ENCODE measurements at regions of chr19 and their contacts with region 1.

Region 1: DNA sequence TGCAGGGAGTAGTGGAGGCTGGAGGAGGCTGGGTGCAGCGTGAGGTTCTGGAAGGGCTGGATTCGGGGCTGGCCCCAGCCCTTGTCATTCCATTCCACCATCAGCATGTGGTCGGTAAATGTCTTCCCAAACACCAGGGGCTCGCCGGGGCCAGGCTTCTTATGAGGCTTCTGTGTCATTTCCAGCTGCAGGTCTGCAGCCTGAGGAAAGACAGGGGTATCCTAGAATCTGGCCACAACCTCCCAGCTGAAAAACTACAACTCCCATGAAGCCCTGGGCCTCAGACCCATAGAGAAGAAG is 4.4 kb downstream of the BCAT2 start:
- DNase-seq: no peak
- H3K4me3 ChIP-seq: no peak overlapping the region
- H3K27ac ChIP-seq: no peak overlapping the region
- H3K4me1 ChIP-seq: no peaks in the 10 kb centered on the region
- H3K27me3 ChIP-seq: no peaks in the 10 kb centered on the region
- CTCF ChIP-seq: no peak

Region 2: DNA sequence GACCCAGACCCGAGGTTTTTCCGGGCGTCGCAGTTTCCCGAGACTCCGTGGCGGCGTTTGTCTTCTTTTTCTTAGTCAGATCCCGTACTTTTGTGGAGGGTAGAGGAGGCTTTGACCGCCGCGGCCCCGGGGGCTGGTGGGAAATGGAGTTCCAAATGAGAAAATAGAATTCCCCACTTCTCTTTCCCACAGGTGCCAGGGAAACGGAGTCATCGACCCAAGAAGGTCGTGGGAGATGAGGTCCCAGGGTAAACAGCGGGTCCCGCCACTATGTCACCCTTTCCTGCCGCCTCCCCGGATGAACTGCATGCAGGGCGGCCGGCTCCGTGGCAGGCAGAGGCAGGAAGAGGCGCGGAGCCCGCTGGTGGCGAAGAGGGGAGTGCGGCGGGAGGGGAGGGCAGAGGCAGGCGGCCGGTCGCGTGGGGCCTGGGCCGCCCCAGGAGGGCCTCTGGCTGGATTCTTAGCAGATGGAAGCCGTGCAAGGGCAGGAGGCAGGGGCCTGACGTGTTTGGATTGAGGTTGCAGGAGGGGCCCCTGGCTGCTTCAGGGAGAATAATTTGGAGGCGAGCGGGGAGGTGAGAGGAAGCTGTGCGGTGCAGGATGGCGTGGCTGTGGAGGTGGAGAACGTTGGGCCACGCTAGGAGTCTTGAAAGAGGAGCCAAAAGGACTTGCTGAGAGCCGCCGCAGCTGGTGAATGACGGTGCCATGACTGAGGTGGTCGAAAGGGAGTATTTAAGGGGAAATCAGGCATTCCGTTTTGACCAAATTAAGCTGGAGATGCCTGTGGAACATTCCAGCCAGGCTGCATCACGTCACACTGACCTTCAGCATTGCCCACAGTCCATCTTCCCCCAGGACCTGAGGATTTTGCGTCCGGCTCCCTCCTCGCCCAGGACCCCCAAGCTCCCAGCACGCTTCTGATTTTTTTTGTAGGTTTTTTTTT is 325.6 kb before region 1 on chr19:
- CTCF ChIA-PET with region 1: no interaction called
- dilution Hi-C with region 1: no loop called
- in situ Hi-C with region 1: no loop called
- intact Hi-C with region 1: no loop called
- DNase-seq: no peak
- H3K4me3 ChIP-seq: no peak overlapping the region
- H3K27ac ChIP-seq: no peak overlapping the region
- H3K4me1 ChIP-seq: no peaks in the 10 kb centered on the region
- H3K27me3 ChIP-seq: no peaks in the 10 kb centered on the region
- CTCF ChIP-seq: no peak

Region 3: DNA sequence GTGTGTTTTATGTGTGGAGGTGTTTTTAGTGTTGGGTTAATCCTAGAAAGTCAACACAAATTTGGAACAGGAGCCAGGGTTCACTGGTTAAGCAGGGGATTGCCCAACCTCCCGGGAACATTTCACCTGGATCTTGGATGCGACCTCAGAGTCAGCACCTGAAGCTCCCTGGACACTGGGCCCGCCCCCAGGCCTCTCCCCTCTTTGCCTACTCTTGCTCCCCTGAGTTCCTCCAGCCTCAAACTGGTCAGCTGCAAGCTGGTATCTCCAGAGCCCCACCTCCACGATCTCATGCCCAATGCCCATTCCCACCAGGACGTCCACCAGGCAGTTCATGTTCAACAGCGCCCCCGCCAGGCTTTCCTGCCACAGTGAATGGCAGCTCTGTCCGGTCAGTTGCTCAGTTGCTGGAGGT is 20.1 kb after region 1 on chr19:
- CTCF ChIA-PET with region 1: no interaction called
- dilution Hi-C with region 1: no loop called
- in situ Hi-C with region 1: no loop called
- intact Hi-C with region 1: no loop called
- DNase-seq: no peak
- H3K4me3 ChIP-seq: no peak overlapping the region
- H3K27ac ChIP-seq: no peak overlapping the region
- H3K4me1 ChIP-seq: no peaks in the 10 kb centered on the region
- H3K27me3 ChIP-seq: no peaks in the 10 kb centered on the region
- CTCF ChIP-seq: peak in 1 of 2 donors; percentile 34

Region 4: GRCh38 chr19:48842789-48843162 is 36.3 kb after region 1 on chr19:
- CTCF ChIA-PET with region 1: no interaction called
- dilution Hi-C with region 1: no loop called
- in situ Hi-C with region 1: no loop called
- intact Hi-C with region 1: no loop called
- DNase-seq: no peak
- H3K4me3 ChIP-seq: no peak overlapping the region
- H3K27ac ChIP-seq: no peak overlapping the region
- H3K4me1 ChIP-seq: no peaks in the 10 kb centered on the region
- H3K27me3 ChIP-seq: no peaks in the 10 kb centered on the region
- CTCF ChIP-seq: peak; percentile 68 to 81

Region 5: GRCh38 chr19:49255674-49256073 is 449.2 kb after region 1 on chr19:
- CTCF ChIA-PET with region 1: no interaction called
- dilution Hi-C with region 1: loop called (anchors 10 kb)
- in situ Hi-C with region 1: no loop called
- intact Hi-C with region 1: no loop called
- DNase-seq: no peak
- H3K4me3 ChIP-seq: no peak overlapping the region
- H3K27ac ChIP-seq: no peak overlapping the region
- H3K4me1 ChIP-seq: no peaks in the 10 kb centered on the region
- H3K27me3 ChIP-seq: no peaks in the 10 kb centered on the region
- CTCF ChIP-seq: no peak

Measured in mammary epithelial cell (primary cell).